Activated T-helper 1 cell treated with anti-CD3 and anti-CD28 coated beads, Interleukin-12 subunit alpha, Interleukin-12 subunit beta, Interleukin-2, Interleukin-4 antibody, amounts not matched to agents 30 ng/mL and 10 ng/mL and 1 ng/mL, durations not matched to agents 14 hours and 24 hours and 36 hours (primary cell): ENCODE measurements at regions of chr5 and their contacts with region 1.

Region 1: DNA sequence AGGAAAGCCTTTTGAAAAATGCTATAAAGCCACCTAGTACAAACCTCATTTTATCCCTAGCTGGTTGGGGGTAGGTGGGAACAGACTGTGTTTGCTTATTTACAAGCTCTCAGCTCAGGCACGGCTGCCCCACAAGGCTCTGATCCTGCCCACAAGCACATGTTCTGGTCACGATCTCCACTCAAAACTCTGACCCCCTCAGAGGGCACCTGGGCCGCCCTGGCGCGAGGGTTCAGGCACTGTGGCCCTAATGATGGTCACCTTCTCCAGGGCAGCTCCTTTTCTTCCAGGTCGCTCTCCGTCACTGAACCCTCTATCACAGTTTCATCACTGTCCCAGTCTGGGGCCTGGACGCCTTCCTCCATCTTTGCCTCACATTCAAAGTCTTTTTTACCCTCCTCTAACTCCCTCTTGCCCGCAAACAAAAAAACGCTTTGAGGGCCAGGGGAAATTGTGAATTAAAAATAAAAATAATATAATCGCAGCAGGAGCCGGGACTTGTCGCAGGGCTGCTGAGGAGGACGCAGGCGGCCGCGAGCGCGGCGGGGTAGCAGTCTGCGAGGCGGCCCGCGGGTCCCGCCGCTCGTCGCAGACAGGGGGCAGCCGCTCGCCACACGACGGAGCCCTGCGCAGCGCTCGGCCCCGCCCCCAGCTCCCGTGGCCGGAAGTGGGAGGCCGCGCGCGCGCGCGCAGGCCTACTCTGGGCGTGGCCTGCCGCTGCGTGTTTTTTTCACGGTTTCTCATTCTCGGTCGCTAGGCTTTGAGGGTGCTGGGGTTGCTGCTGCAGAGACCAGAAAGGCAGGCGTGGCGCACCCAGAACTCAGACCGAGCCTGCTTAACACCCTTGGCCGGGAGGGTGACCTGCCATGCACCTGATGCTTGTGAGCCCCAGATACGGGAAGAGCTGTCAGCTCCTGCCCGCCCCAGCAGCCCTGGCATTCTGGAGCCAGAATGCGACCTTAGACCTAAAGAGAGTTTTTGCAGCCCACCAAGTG is at the start of gene ANKRD31:
- DNase-seq: peak; percentile 86
- H3K4me3 Mint-ChIP-seq: peak within 1 kb of the TSS; percentile 90
- H3K27ac Mint-ChIP-seq: peak within 1 kb of the TSS; percentile 97
- H3K4me1 Mint-ChIP-seq: peaks cover 15% of the 10 kb centered on the region
- H3K27me3 Mint-ChIP-seq: peaks cover 6% of the 10 kb centered on the region
- total RNA-seq, gene ANKRD31: 0.36 and 0.37 TPM in 2 replicates

Region 2: DNA sequence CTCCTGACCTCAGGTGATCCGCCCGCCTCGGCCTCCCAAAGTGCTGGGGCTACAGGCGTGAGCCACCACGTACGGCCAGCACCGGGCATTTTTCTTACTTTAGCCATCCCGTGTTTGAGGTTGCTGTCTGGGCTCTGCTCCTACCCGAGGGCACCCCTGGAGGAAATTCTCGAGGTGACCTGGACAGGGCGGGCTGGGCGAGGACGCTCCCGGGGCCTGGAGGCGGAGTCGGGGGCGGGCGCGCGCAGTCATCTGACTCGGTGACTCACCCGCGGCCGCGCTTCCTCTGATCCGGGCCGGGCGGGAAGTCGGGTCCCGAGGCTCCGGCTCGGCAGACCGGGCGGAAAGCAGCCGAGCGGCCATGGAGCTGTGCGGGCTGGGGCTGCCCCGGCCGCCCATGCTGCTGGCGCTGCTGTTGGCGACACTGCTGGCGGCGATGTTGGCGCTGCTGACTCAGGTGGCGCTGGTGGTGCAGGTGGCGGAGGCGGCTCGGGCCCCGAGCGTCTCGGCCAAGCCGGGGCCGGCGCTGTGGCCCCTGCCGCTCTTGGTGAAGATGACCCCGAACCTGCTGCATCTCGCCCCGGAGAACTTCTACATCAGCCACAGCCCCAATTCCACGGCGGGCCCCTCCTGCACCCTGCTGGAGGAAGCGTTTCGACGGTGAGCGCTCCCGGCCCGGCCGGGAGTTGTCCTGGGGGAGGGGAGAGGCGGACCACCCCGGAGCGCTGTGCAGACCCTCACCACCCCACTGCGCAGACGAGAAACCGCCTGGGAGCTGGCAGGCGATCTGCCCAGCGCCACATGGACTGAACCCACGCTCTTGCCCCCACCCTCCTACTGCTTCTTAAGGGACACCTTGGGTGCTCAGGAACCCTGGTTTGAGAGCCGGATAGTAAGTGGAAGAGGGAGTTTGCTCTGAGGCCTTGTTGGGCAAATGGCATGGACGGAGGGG is 551.4 kb before region 1 on chr5 and contains the start of gene HEXB:
- intact Hi-C with region 1: loop called (anchors 10 kb)
- DNase-seq: peak; percentile 83
- H3K4me3 Mint-ChIP-seq: peak within 1 kb of the TSS; percentile 90
- H3K27ac Mint-ChIP-seq: peak within 1 kb of the TSS; percentile 71
- H3K4me1 Mint-ChIP-seq: peaks cover 23% of the 10 kb centered on the region
- H3K27me3 Mint-ChIP-seq: peaks cover 14% of the 10 kb centered on the region
- total RNA-seq, gene HEXB: 62.7 and 71.4 TPM in 2 replicates

Region 3: DNA sequence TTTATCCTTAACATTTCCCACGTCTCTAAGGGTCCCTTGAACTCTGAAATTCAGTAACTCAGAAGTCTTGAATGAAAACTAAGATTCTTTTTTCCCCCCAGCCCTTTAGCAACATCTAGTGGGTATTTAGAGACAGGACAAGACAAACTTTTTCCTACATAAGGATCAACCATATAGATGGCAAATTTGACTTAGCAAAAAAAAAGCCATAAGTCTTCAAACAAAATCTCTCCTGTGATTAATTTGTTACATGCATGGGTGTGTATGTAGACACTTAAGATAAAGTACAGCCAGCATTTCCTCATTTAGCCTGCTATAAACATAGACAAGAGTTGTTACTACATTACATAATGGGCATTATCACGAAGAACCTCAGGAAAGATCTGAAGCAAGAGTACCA is 29.1 kb after region 1 on chr5:
- intact Hi-C with region 1: loop called (anchors 1 kb)
- DNase-seq: no peak
- H3K4me3 Mint-ChIP-seq: no peak overlapping the region
- H3K27ac Mint-ChIP-seq: no peak overlapping the region
- H3K4me1 Mint-ChIP-seq: no peaks in the 10 kb centered on the region
- H3K27me3 Mint-ChIP-seq: peaks cover 5% of the 10 kb centered on the region

Region 4: GRCh38 chr5:75351139-75351926 is 114.7 kb after region 1 on chr5:
- intact Hi-C with region 1: loop called (anchors 5 kb)
- DNase-seq: no peak
- H3K4me3 Mint-ChIP-seq: no peak overlapping the region
- H3K27ac Mint-ChIP-seq: peak overlapping the region; percentile 72
- H3K4me1 Mint-ChIP-seq: peaks cover 32% of the 10 kb centered on the region
- H3K27me3 Mint-ChIP-seq: no peaks in the 10 kb centered on the region

Region 5: GRCh38 chr5:75668977-75669689 is 432.5 kb after region 1 on chr5:
- intact Hi-C with region 1: loop called (anchors 1 kb)
- DNase-seq: peak; percentile 37
- H3K4me3 Mint-ChIP-seq: peak overlapping the region; percentile 79
- H3K27ac Mint-ChIP-seq: peak overlapping the region; percentile 91
- H3K4me1 Mint-ChIP-seq: peaks cover 36% of the 10 kb centered on the region
- H3K27me3 Mint-ChIP-seq: peaks cover 3% of the 10 kb centered on the region

Region 6: DNA sequence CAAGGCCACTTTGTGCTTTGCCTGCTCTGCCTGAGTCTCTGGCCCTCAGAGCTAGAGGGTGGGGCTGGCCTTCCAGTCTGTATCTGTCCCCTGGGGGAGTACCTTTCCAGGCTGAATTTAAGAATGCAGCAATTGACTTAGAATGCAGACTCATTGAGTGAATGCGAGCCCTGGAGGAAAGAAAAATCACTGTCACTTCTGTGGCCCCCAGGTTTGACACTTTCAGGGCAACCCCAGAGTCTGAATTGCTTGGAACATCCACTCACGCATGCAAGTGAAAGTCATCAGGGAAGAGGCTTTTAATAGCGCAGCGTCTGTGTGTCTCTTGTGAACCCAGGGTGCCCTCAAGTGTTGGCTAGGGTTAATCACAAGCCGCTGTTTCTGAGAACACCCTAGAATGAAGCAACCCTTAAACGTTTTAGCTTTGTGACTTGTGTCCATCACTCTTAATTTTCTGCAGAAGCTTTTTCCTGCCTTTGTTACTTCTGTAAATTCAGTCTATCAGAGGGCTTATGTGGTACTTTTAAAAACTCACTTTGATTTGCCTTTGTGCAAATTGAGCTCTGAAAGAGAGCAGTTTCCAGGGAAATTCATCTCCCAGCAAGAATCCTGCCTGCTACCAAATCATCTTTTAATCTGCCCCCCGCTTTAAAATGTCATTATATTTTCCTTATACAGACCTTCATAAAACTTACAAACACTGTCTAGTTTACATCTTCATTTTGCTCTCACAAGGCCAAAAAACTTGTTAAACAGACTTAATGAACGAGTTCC is 1019.7 kb after region 1 on chr5:
- intact Hi-C with region 1: loop called (anchors 1 kb)
- DNase-seq: peak; percentile 55
- H3K4me3 Mint-ChIP-seq: no peak overlapping the region
- H3K27ac Mint-ChIP-seq: no peak overlapping the region
- H3K4me1 Mint-ChIP-seq: no peaks in the 10 kb centered on the region
- H3K27me3 Mint-ChIP-seq: peaks cover 22% of the 10 kb centered on the region